ENCODE measurements at regions of chr19 and their contacts with region 1.

Region 1: DNA sequence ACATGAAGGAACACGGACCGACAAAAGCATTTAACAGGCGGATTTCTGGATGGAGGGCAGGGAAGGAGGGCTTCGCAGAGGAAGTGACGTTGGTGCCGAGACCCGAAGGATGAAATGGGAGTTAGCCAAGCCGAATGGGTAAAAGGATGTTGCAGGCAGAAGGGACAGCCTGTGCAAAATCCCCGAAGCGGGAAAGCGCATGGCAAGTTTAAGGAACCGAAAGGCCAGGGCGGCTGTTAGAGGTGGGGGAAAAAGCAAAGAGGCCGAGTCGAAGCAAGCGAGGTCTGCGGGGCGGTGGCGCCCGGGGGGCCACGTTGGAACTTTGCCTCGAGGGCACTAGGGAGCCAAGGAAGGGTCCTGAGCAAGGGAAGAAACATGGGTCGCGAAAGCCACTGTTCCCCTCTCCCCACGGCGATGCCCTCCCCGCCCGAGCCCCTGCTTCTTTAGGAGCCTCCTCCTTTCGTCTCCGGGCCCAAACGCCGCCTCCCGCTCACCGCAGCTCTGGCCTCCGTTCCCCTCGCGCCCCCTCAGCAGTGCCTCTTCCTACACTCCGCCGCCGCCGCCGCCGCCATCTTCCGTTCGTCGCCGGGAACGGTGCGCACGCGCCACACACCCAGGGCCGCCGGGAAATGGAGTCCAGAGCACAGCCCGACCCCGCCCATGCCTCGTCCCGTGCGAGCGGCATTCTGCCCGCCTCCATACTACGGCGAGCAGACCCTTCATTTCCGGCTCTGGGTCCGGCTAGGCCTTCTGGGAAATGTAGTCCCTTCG is at the start of gene SYMPK:
- DNase-seq: peak; percentile 91
- H3K4me3 ChIP-seq: peak within 1 kb of the TSS; percentile 78
- H3K27me3 ChIP-seq: peaks cover 24% of the 10 kb centered on the region
- CTCF ChIP-seq: no peak
- polyA plus RNA-seq, gene SYMPK: 45.8 and 60.2 TPM in 2 replicates

Region 2: GRCh38 chr19:45746866-45747265 is 115.9 kb before region 1 on chr19:
- CTCF ChIA-PET with region 1: no interaction called
- POLR2A ChIA-PET with region 1: no interaction called
- DNase-seq: no peak
- H3K4me3 ChIP-seq: no peak overlapping the region
- H3K27me3 ChIP-seq: no peaks in the 10 kb centered on the region
- CTCF ChIP-seq: no peak

Region 3: GRCh38 chr19:45842198-45842597 is 20.6 kb before region 1 on chr19:
- CTCF ChIA-PET with region 1: no interaction called
- POLR2A ChIA-PET with region 1: no interaction called
- DNase-seq: no peak
- H3K4me3 ChIP-seq: no peak overlapping the region
- H3K27me3 ChIP-seq: no peaks in the 10 kb centered on the region
- CTCF ChIP-seq: no peak

Region 4: DNA sequence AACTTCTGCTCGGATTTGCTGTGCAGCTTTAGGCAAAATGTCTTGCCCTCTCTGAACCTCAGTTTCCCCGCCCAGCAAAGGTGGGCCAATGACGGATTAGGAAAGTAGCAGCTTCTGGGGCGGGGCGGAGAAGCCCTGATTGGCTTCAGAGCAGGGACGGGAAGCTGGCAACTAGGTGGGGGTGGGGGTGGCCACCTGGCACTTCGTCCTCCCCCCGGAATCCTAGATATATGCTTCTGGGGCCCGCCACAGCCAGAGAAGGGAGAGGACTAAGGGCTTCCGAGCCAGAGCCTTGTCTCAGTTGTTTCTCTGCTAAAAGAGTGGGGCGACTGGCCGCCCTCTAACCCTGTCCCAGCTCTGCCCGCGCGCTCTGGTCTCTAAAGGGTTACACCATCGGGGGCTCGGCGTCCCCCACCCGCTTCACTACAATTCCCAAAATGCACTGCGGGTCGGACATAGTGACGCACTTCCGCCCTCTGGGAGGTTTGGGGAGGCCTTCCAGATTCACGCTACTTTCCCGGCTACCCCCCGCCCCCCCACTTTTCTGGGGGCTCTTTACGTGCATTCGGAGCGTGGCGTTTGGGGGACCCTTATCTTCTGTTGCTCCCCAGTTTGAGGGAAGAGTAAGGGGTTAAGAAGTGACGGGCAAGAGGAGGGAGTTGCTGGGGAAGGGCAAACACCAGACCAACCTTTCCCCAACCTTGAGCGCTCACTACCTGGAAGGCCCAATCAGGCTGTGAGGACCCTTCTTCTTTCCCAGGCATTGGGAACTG is 23.9 kb after region 1 on chr19:
- CTCF ChIA-PET with region 1: interaction called, 49 read pairs
- POLR2A ChIA-PET with region 1: interaction called, 3 read pairs
- DNase-seq: peak; percentile 49
- H3K4me3 ChIP-seq: peak overlapping the region; percentile 79
- H3K27me3 ChIP-seq: no peaks in the 10 kb centered on the region
- CTCF ChIP-seq: no peak

Region 5: GRCh38 chr19:45900738-45901431 is 38.1 kb after region 1 on chr19:
- CTCF ChIA-PET with region 1: no interaction called
- POLR2A ChIA-PET with region 1: no interaction called
- DNase-seq: no peak
- H3K4me3 ChIP-seq: peak overlapping the region; percentile 61
- H3K27me3 ChIP-seq: 0 out of 2 replicates have a peak, but pooled peaks cover 1% of the 10 kb centered on the region
- CTCF ChIP-seq: no peak

Measured in BJ (cell line).